ENCODE measurements at regions of chr6 and their contacts with region 1.

Region 1: GRCh38 chr6:44151348-44152108 is 7.1 kb upstream of the CAPN11 start:
- DNase-seq: peak; percentile 76 to 81 (median 81)
- ATAC-seq: peak; percentile 73 to 88 (median 82)
- H3K4me3 ChIP-seq: no peak overlapping the region
- H3K27ac ChIP-seq: no peak overlapping the region
- H3K4me1 ChIP-seq: peaks cover 0 to 8% (median 0%) of the 10 kb centered on the region in 4 donors
- H3K27me3 ChIP-seq: no peaks in the 10 kb centered on the region
- CTCF ChIP-seq: peak; percentile 97 to 99 (median 98)
- POLR2A ChIP-seq: no peak

Region 2: GRCh38 chr6:43977404-43978111 is 174.0 kb before region 1 on chr6:
- intact Hi-C with region 1: no loop called
- DNase-seq: peak in 1 of 3 donors; percentile 28
- ATAC-seq: no peak
- H3K4me3 ChIP-seq: no peak overlapping the region
- H3K27ac ChIP-seq: no peak overlapping the region
- H3K4me1 ChIP-seq: peaks cover 0 to 9% (median 0%) of the 10 kb centered on the region in 4 donors
- H3K27me3 ChIP-seq: no peaks in the 10 kb centered on the region
- CTCF ChIP-seq: no peak
- POLR2A ChIP-seq: no peak

Region 3: DNA sequence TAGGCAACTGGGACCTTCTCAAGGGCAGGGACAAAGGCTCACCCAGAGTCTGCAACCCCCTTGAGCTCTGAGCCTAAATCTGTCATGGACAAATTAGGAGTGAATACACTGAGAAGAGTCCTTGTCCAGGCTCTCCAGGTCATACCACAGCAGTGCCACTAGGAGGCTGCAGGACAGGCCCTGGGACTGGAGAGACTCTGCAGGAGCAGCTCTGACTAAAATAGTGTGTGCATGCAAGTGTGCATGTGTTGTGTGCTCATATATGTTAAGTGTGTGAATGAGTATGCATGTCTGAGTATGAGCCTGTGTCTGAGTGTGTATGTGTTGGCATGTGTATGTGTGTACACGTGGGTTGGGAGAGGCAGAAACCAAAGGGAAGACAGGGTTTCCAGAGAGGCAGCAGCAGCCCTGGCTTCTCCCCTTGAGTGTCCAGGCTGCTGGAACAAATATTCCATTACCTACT is 51.4 kb before region 1 on chr6:
- intact Hi-C with region 1: loop called (anchors 5 to 10 kb)
- DNase-seq: no peak
- ATAC-seq: peak; percentile 60 to 76 (median 72)
- H3K4me3 ChIP-seq: no peak overlapping the region
- H3K27ac ChIP-seq: no peak overlapping the region
- H3K4me1 ChIP-seq: peaks cover 0 to 21% (median 6%) of the 10 kb centered on the region in 4 donors
- H3K27me3 ChIP-seq: no peaks in the 10 kb centered on the region
- CTCF ChIP-seq: peak; percentile 53 to 66 (median 62)
- POLR2A ChIP-seq: no peak